H1 (cell line): ENCODE measurements at regions of chr20 and their contacts with region 1.

Region 1: GRCh38 chr20:35207950-35208611 is 18.4 kb upstream of the MMP24 start:
- DNase-seq: peak in 1 of 2 experiments; percentile 81
- H3K4me3 ChIP-seq: no peak overlapping the region
- H3K27ac ChIP-seq: no peak overlapping the region
- H3K4me1 ChIP-seq: no peaks in the 10 kb centered on the region
- H3K27me3 ChIP-seq: no peaks in the 10 kb centered on the region
- CTCF ChIP-seq: peak in 2 of 3 experiments; percentile 80 to 82; a peak in 3 of 4 replicates
- EP300 ChIP-seq: no peak
- POLR2A ChIP-seq: no peak
- RAD21 ChIP-seq: peak; percentile 94 to 96

Region 2: DNA sequence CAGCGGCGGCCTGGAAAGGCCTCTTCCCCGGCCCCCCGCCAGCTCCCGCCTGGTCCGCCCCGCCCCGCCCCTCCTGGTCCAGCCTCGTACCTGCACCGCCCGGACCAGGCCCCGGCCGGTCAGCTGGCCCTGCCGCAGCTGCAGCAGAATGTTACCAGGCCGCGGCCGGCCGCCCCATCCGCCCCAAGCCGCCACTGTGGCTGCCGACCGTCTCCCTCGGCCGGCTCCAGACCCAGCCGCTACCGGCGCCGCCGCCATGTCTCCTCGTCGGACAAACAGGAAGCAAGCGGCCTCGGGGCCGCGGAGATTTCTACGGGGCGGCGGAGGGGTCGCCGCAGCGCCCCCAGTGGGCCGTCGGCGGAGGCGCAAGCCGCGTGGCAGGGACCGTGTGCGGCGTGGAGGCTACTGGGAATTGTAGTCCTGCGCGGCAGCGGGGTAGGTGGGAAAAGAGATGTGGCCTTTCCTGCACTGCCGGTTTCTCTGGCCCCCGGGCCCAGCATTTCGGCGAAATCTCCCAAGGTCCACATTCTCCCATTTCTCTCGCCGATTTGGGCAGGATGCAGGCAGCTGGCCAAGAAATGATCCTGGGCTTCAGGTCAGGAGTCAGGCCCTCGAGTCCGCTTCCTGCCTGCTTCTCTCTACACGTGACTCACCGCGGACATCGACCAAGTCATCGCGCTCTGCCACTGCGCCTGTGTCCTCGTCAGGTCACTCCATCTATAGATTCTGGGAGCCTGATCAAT is 115.4 kb before region 1 on chr20 and contains the start of gene TRPC4AP:
- CTCF ChIA-PET with region 1: interaction called, 42 read pairs
- POLR2A ChIA-PET with region 1: no interaction called
- DNase-seq: peak; percentile 75 to 92
- H3K4me3 ChIP-seq: peak within 1 kb of the TSS; percentile 82 to 96 (median 90)
- H3K27ac ChIP-seq: peak within 1 kb of the TSS; percentile 72; the same call in 1 of the 2 replicates
- H3K4me1 ChIP-seq: peaks cover 0 to 10% (median 4%) of the 10 kb centered on the region in 4 experiments; a peak in 5 of 7 replicates
- H3K27me3 ChIP-seq: no peaks in the 10 kb centered on the region
- CTCF ChIP-seq: peak; percentile 88 to 94 (median 89)
- EP300 ChIP-seq: no peak
- POLR2A ChIP-seq: peak in 1 of 2 experiments; percentile 93; a peak in 2 of 3 replicates
- RAD21 ChIP-seq: peak; percentile 23 to 56; a peak in 3 of 4 replicates
- total RNA-seq, gene TRPC4AP: 72.7 and 73.1 TPM in 2 replicates

Region 3: DNA sequence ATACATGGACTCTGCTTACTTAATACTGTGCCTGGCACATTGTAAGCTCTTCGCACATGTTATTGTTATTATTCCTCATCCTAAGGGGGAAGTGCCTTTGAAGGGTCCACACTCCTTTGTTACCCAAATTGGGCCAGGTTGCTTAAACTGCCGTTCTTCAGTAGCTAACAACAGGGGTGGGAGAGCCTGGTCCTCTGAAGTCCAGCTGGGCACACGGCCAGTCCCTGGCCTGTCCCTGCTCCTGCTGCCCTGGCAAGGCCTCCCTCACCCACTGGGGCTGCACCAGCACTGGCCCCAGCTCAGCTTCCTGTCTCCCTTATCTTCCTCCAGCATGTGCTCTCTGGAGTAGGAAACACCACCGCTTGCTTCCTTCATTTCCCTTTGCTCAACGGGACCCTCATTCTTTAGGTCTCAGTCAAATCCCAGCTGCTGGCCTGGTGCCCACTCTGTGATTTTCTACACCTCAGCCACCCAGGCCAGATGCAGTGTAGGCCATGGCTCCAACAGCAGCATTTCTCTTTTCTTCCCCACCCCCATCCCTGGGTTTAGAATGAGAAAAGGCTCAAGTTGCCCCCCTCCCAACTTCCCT is 41.7 kb before region 1 on chr20:
- CTCF ChIA-PET with region 1: interaction called, 14 read pairs
- POLR2A ChIA-PET with region 1: no interaction called
- DNase-seq: peak in 1 of 2 experiments; percentile 62
- H3K4me3 ChIP-seq: peak overlapping the region in 2 of 4 experiments; percentile 10 to 11; a peak in 3 of 8 replicates
- H3K27ac ChIP-seq: no peak overlapping the region; the same call in 1 of the 2 replicates
- H3K4me1 ChIP-seq: peaks cover 3 to 8% (median 6%) of the 10 kb centered on the region in 4 experiments; a peak in 6 of 7 replicates
- H3K27me3 ChIP-seq: no peaks in the 10 kb centered on the region
- CTCF ChIP-seq: no peak
- EP300 ChIP-seq: no peak
- POLR2A ChIP-seq: no peak
- RAD21 ChIP-seq: no peak

Region 4: DNA sequence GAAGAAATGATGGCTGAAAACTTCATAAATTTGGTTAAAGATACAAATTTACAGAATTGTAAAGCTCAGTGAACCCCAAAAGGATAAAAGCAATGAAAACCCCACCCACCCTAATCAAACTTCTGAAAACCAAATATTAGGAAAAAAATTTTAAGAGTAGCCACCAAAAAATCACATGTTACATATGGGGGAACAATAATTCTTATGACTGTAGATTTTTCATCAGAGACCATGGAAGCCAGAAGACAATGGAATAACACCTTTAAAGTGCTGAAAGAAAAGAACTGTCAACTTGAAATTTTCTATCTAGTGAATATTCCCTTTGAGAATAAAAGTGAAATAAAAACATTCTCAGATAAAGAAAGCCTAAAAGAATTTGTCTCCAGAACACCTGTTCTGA is 11.8 kb before region 1 on chr20:
- CTCF ChIA-PET with region 1: interaction called, 22 read pairs
- POLR2A ChIA-PET with region 1: no interaction called
- DNase-seq: no peak
- H3K4me3 ChIP-seq: no peak overlapping the region
- H3K27ac ChIP-seq: no peak overlapping the region
- H3K4me1 ChIP-seq: peaks cover 0 to 6% (median 0%) of the 10 kb centered on the region in 4 experiments; a peak in 3 of 7 replicates
- H3K27me3 ChIP-seq: peaks cover 0 to 2% (median 0%) of the 10 kb centered on the region in 4 experiments; a peak in 2 of 7 replicates
- CTCF ChIP-seq: no peak
- EP300 ChIP-seq: no peak
- POLR2A ChIP-seq: no peak
- RAD21 ChIP-seq: no peak

Region 5: GRCh38 chr20:35263532-35264223 is 55.6 kb after region 1 on chr20:
- CTCF ChIA-PET with region 1: interaction called, 37 read pairs
- POLR2A ChIA-PET with region 1: no interaction called
- DNase-seq: no peak
- H3K4me3 ChIP-seq: peak overlapping the region in 3 of 4 experiments; percentile 9 to 39 (median 16); a peak in 4 of 8 replicates
- H3K27ac ChIP-seq: peak overlapping the region; percentile 99
- H3K4me1 ChIP-seq: peaks cover 16 to 39% (median 30%) of the 10 kb centered on the region in 4 experiments
- H3K27me3 ChIP-seq: no peaks in the 10 kb centered on the region
- CTCF ChIP-seq: no peak
- EP300 ChIP-seq: no peak
- POLR2A ChIP-seq: no peak
- RAD21 ChIP-seq: no peak